Aorta (tissue), 5 donors: ENCODE measurements at regions of chr19 and their contacts with region 1.

Region 1: GRCh38 chr19:13731147-13731964 is 33.0 kb upstream of the MRI1 start:
- DNase-seq: peak; percentile 97 to 98
- ATAC-seq: peak; percentile 98
- H3K4me3 ChIP-seq: peak overlapping the region; percentile 44 to 75
- H3K27ac ChIP-seq: peak overlapping the region; percentile 90 to 97
- H3K4me1 ChIP-seq: no peaks in the 10 kb centered on the region
- H3K27me3 ChIP-seq: no peaks in the 10 kb centered on the region

Region 2: GRCh38 chr19:13172068-13172896 is 559.1 kb before region 1 on chr19:
- intact Hi-C with region 1: loop called in 1 of 2 experiments (anchors 10 kb)
- DNase-seq: peak; percentile 95
- ATAC-seq: peak; percentile 64
- H3K4me3 ChIP-seq: no peak overlapping the region
- H3K27ac ChIP-seq: peak overlapping the region; percentile 31 to 96
- H3K4me1 ChIP-seq: no peaks in the 10 kb centered on the region
- H3K27me3 ChIP-seq: no peaks in the 10 kb centered on the region

Region 3: DNA sequence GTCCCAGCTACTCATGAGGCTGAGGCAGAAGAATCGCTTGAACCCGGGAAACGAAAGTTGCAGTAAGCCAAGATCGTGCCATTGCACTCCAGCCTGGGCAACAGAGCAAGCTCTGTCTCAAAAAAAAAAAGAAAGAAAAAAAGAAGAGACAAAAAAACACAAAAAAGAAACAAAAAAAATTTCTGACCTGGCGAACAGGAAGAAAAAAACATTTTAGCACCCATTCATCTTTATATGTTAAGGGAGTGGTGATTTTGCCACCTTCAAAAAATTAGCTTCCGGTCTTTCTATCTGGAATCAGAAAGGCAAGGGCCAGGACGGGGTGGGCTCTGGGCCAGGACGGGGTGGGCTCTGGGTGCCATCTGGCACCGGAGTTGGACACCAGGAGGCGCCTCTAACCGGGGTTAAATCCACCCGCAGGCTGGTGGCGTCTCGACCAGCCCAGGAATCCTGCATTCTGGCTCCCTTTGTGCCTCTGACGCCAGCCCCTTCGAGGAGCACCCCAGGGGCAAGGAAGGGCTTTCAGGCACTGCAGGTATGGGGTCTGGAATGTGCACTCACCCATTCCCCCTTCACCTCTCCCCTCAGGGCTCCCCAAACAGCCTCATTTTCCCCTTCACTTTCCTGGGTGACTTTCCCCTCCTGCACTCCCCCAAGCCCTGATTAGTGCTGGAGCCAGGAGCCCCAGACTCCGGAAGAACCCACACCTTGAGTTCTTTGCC is 53.5 kb after region 1 on chr19:
- intact Hi-C with region 1: loop called in 1 of 2 experiments (anchors 5 kb)
- DNase-seq: peak; percentile 90 to 95
- ATAC-seq: peak; percentile 66
- H3K4me3 ChIP-seq: no peak overlapping the region
- H3K27ac ChIP-seq: peak overlapping the region in 1 of 2 donors; percentile 90
- H3K4me1 ChIP-seq: no peaks in the 10 kb centered on the region
- H3K27me3 ChIP-seq: no peaks in the 10 kb centered on the region